ENCODE measurements at regions of chr5 and their contacts with region 1.

Region 1: GRCh38 chr5:60929024-60929423 is 15.8 kb downstream of the ERCC8 start:
- DNase-seq: no peak
- ATAC-seq: no peak
- H3K4me3 ChIP-seq: no peak overlapping the region
- H3K27ac ChIP-seq: no peak overlapping the region
- H3K4me1 ChIP-seq: no peaks in the 10 kb centered on the region
- H3K27me3 ChIP-seq: no peaks in the 10 kb centered on the region
- CTCF ChIP-seq: no peak; the same call in 1 of the 2 replicates

Region 2: DNA sequence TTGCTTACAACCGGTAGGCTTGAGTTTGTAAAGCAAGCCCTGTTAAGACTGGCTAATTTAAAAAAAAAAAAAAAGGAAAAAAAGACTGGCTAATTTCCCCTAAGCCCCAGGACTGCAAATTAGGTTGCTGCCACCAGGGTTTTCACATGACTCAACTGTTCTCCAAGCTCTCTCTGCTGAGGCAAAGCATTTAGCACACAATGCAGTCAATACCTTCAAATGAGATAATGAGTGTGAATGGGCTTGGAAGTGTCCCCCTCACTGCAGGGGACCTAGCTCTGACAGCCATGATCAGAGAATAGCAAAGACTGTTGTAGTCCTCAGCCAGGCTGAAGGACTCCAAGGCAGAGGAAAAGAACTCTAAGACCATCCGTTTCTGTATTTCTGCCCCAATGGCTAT is 360.2 kb after region 1 on chr5:
- CTCF ChIA-PET with region 1: no interaction called
- POLR2A ChIA-PET with region 1: no interaction called
- intact Hi-C with region 1: loop called (anchors 5 kb)
- DNase-seq: no peak
- ATAC-seq: no peak
- H3K4me3 ChIP-seq: no peak overlapping the region
- H3K27ac ChIP-seq: no peak overlapping the region
- H3K4me1 ChIP-seq: peaks cover 9% of the 10 kb centered on the region; the same call in 1 of the 2 replicates
- H3K27me3 ChIP-seq: no peaks in the 10 kb centered on the region
- CTCF ChIP-seq: no peak

Measured in PC-3 (cell line).